GM12878 (cell line): ENCODE measurements at regions of chr7 and their contacts with region 1.

Region 1: DNA sequence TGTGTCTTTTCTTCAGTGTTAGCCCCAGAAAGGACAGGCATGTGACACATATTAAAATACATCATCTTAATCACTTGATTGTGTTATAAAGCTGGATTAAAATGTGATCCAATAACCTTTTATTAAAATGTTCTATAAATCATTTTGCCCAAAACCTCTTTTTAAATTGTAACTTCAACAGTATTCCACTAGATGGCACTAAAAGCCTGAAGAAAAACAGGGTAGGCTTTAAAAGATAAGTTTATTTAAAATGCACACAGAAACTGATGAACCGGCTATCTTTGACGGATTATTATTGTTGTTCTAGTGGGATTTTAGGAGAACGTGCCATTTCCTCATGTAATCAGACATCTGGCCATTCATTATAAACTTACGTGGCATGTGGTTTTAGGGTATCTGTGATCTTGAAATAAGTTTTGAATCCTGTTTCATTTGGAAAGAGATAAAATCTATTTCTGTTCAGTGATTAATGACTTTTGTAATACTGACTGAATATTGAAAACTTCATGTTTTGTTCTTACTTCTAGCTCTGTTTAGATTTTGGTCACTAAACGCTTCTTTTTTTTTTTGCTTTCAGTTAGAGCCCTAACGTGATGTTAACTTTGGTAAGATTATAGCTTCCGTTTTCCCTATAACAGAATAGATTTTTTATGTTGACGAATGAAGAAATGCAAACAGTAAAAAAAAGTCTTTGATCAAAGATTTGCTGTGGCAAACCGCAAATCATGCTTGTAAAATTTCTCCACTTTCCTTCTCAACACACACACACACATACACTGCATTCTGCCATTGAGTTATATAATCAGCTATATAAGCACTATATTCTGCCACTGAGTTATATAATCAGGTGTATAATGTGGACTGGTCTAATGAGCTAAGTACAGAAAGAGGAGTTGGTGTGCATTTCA is 13.6 kb downstream of the VPS50 start:
- DNase-seq: no peak
- ATAC-seq: peak; percentile 34; the same call in 2 of the 3 replicates
- H3K4me3 ChIP-seq: no peak overlapping the region
- H3K27ac ChIP-seq: no peak overlapping the region
- H3K4me1 ChIP-seq: no peaks in the 10 kb centered on the region
- H3K27me3 ChIP-seq: no peaks in the 10 kb centered on the region
- CTCF ChIP-seq: peak; percentile 27 to 52 (median 46); a peak in 4 of 6 replicates
- EP300 ChIP-seq: no peak
- POLR2A ChIP-seq: no peak
- RAD21 ChIP-seq: peak; percentile 72

Region 2: GRCh38 chr7:92669616-92670165 is 576.1 kb before region 1 on chr7:
- CTCF ChIA-PET with region 1: no interaction called
- POLR2A ChIA-PET with region 1: no interaction called
- RAD21 ChIA-PET with region 1: no interaction called
- SMC1A ChIA-PET with region 1: no interaction called
- in situ Hi-C with region 1: no loop called
- intact Hi-C with region 1: no loop called
- DNase-seq: no peak
- ATAC-seq: no peak
- H3K4me3 ChIP-seq: no peak overlapping the region
- H3K27ac ChIP-seq: no peak overlapping the region
- H3K4me1 ChIP-seq: peaks cover 12% of the 10 kb centered on the region
- H3K27me3 ChIP-seq: no peaks in the 10 kb centered on the region
- CTCF ChIP-seq: no peak
- EP300 ChIP-seq: no peak
- POLR2A ChIP-seq: no peak
- RAD21 ChIP-seq: no peak

Region 3: GRCh38 chr7:93279541-93279940 is 33.8 kb after region 1 on chr7:
- CTCF ChIA-PET with region 1: interaction called, 21 read pairs
- POLR2A ChIA-PET with region 1: no interaction called
- RAD21 ChIA-PET with region 1: interaction called, 3 read pairs
- SMC1A ChIA-PET with region 1: no interaction called
- in situ Hi-C with region 1: no loop called
- intact Hi-C with region 1: no loop called
- DNase-seq: no peak
- ATAC-seq: no peak
- H3K4me3 ChIP-seq: no peak overlapping the region
- H3K27ac ChIP-seq: no peak overlapping the region
- H3K4me1 ChIP-seq: no peaks in the 10 kb centered on the region
- H3K27me3 ChIP-seq: no peaks in the 10 kb centered on the region
- CTCF ChIP-seq: no peak
- EP300 ChIP-seq: no peak
- POLR2A ChIP-seq: no peak
- RAD21 ChIP-seq: no peak

Region 4: GRCh38 chr7:93374345-93374940 is 128.7 kb after region 1 on chr7:
- CTCF ChIA-PET with region 1: interaction called, 30 read pairs
- POLR2A ChIA-PET with region 1: no interaction called
- RAD21 ChIA-PET with region 1: interaction called, 12 read pairs
- SMC1A ChIA-PET with region 1: interaction called, 8 read pairs
- in situ Hi-C with region 1: no loop called
- intact Hi-C with region 1: loop called (anchors 1 kb)
- DNase-seq: no peak
- ATAC-seq: peak; percentile 84
- H3K4me3 ChIP-seq: no peak overlapping the region
- H3K27ac ChIP-seq: no peak overlapping the region
- H3K4me1 ChIP-seq: peaks cover 5% of the 10 kb centered on the region
- H3K27me3 ChIP-seq: 0 out of 4 replicates have a peak, but pooled peaks cover 0 to 3% of the 10 kb centered on the region in 2 experiments
- CTCF ChIP-seq: peak; percentile 63 to 87 (median 82)
- EP300 ChIP-seq: no peak
- POLR2A ChIP-seq: no peak
- RAD21 ChIP-seq: peak; percentile 67

Region 5: DNA sequence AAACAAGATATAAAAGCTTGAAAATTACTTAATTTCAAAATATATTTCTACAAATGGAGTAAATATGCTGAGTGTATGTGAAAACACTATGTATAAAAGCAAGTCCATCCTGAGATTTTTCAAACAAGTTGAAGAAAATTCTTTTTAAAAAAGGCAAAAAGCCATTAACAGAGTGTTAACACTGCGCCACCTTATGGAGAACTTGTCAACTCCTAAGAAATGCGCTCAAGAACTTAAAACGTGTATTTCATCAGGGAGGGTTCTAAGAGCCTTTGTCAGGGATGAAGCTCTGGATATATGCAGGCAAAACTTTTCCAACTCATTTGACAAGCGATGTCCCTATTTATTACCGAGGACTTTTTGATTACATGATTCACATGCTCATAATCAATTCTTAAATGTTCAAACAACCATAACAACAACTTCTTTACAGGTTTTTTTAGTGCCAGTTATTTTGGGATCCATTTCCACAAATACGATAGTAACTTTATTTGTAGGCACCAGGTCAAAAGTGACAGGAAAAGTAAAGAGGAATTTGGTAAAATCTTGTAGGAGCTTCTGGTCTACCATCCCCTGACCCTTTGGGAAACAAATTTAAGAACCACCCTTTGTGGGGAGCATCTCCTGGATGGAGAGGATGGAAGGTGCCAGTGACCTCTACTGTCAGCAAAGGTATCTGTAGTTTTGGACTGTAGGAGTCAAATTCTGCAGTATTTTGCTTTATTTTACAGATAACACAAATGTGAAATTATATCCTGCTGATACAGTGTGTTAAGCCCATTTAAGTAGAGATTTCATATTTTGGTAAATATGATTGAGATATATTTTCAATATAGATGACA is 305.5 kb after region 1 on chr7:
- CTCF ChIA-PET with region 1: interaction called, 103 read pairs
- POLR2A ChIA-PET with region 1: no interaction called
- RAD21 ChIA-PET with region 1: interaction called, 4 read pairs
- SMC1A ChIA-PET with region 1: interaction called, 19 read pairs
- in situ Hi-C with region 1: loop called (anchors 5 kb)
- intact Hi-C with region 1: loop called (anchors 1 kb)
- DNase-seq: no peak
- ATAC-seq: peak; percentile 70
- H3K4me3 ChIP-seq: no peak overlapping the region
- H3K27ac ChIP-seq: no peak overlapping the region
- H3K4me1 ChIP-seq: no peaks in the 10 kb centered on the region
- H3K27me3 ChIP-seq: 0 out of 4 replicates have a peak, but pooled peaks cover 0 to 1% of the 10 kb centered on the region in 2 experiments
- CTCF ChIP-seq: peak; percentile 50 to 54 (median 50); a peak in 5 of 6 replicates
- EP300 ChIP-seq: no peak
- POLR2A ChIP-seq: no peak
- RAD21 ChIP-seq: peak; percentile 66